Activated naive CD4-positive, alpha-beta T cell treated with anti-CD3 and anti-CD28 coated beads, Interleukin-2, amount 10 ng/mL, durations not matched to agents 7 days and 5 days (primary cell): ENCODE measurements at regions of chr7 and their contacts with region 1.

Region 1: DNA sequence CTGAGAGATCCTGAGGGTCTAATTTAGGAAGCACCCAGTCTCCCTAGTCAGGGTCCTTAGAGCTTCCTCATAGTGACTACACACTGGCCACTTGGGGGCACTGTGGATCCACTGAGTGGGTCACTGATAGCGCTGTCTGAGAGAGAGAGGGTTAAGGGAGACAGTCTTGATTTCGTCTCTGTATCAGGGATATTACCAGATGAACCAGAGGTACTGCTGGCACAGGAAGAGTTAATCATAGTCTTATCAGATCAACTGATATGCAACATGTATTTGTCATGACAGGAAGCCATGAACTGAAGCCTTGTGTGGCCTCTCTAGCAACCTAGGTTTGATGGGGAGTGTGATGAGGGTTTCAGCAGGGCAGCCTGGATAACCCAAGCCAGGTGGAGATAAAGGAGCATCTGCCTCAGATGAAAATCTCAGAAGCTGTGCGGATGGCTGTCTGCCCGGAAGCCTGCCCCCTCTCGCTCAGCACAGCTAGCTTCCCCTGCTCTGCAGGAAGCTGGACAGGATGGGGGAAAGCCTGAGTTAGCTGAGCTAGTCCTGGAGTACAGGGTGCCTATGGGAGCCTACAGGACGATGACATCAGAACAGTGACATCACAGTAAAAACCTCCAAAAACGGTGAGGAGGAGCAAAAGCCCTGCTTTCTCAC is 214.0 kb upstream of the PRSS1 start:
- DNase-seq: peak; percentile 83
- H3K4me3 Mint-ChIP-seq: peak overlapping the region; percentile 67
- H3K27ac Mint-ChIP-seq: peak overlapping the region; percentile 87
- H3K4me1 Mint-ChIP-seq: peaks cover 39% of the 10 kb centered on the region
- H3K27me3 Mint-ChIP-seq: no peaks in the 10 kb centered on the region

Region 2: DNA sequence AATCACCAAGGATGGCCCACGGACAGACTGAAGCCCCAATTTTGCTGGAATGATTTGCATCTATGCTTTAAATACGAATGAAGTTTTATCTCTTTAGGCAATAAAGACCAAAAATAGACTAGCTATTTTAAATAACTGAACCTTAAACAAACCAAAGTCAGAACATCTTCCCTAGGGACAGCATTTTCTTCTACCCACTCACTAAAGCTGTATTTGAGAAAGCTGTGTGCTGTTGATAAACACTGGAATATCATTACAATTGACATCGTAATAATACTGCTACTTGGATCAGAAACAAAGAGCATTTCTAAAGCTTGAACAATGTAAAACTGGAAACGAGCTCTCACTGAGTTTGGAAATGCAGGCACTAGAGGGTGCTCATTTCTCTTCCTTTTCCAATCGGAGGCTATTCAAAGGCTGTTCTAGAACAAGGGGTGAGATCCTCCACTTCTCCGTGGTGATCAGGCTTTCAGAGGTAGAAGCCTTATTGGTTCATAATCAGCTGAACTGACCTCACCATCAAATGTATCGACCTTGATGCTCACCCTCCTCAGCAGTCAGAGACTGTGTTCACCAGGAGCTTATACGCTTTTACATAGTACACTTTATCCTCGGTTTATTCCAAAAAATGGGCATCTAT is 11.3 kb before region 1 on chr7:
- CTCF ChIA-PET with region 1: interaction called, 29 read pairs
- DNase-seq: no peak
- H3K4me3 Mint-ChIP-seq: no peak overlapping the region
- H3K27ac Mint-ChIP-seq: no peak overlapping the region
- H3K4me1 Mint-ChIP-seq: peaks cover 25% of the 10 kb centered on the region
- H3K27me3 Mint-ChIP-seq: peaks cover 24% of the 10 kb centered on the region

Region 3: DNA sequence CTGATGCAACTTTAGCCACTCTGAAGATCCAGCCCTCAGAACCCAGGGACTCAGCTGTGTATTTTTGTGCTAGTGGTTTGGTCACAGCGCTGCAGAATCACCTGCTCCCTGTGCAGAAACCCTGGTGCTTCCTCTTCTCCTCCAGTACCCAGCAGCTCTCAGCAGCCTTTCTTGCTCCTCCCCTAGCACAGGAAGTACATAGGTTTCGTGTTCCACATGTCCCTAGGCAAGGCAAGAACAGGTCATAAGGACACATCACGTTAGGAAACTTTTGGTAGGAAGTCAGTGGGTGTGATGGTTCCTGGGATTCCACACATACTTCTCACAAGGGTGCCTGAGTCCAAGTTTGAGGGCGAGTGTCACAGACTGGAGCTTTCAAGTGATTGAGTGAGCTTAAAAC is 46.1 kb after region 1 on chr7:
- CTCF ChIA-PET with region 1: interaction called, 42 read pairs
- DNase-seq: peak; percentile 55
- H3K4me3 Mint-ChIP-seq: peak overlapping the region; percentile 54
- H3K27ac Mint-ChIP-seq: peak overlapping the region; percentile 81
- H3K4me1 Mint-ChIP-seq: peaks cover 34% of the 10 kb centered on the region
- H3K27me3 Mint-ChIP-seq: no peaks in the 10 kb centered on the region

Region 4: DNA sequence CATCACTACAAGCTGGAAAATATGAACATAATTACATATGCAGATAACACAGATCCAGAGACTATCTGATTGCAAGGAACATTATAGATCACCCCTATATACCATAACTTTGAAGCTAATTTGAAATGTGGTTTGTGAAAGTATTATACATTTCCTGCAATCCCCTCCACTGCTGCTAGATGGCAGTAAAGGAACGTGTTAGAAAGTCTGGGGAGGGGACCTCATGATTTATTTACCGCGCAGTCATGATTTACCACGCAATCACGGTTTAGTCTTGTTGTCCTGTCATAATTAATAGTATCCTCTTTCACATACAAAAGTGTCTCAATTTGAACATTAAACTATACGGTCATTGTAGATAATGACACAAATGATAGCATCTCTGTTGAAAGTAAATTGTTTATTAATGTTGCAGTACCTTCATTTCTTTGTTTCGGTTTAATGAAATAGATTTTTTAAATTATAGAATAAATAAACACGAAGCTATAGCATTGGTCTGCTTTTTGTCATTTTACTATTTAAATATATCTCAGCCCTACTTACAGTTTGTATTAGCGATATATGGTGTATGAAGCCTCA is 68.7 kb after region 1 on chr7:
- CTCF ChIA-PET with region 1: interaction called, 13 read pairs
- DNase-seq: peak; percentile 68
- H3K4me3 Mint-ChIP-seq: peak overlapping the region; percentile 35
- H3K27ac Mint-ChIP-seq: no peak overlapping the region
- H3K4me1 Mint-ChIP-seq: peaks cover 18% of the 10 kb centered on the region
- H3K27me3 Mint-ChIP-seq: peaks cover 26% of the 10 kb centered on the region

Region 5: GRCh38 chr7:142866361-142867058 is 331.3 kb after region 1 on chr7:
- CTCF ChIA-PET with region 1: interaction called, 10 read pairs
- DNase-seq: peak; percentile 42
- H3K4me3 Mint-ChIP-seq: no peak overlapping the region
- H3K27ac Mint-ChIP-seq: peak overlapping the region; percentile 42
- H3K4me1 Mint-ChIP-seq: no peaks in the 10 kb centered on the region
- H3K27me3 Mint-ChIP-seq: no peaks in the 10 kb centered on the region